GM12878 (cell line): ENCODE measurements at regions of chr3 and their contacts with region 1.

Region 1: GRCh38 chr3:69306239-69307185 is 79.4 kb downstream of the FRMD4B start:
- DNase-seq: no peak
- ATAC-seq: peak; percentile 98
- H3K4me3 ChIP-seq: no peak overlapping the region
- H3K27ac ChIP-seq: no peak overlapping the region
- H3K4me1 ChIP-seq: no peaks in the 10 kb centered on the region
- H3K27me3 ChIP-seq: no peaks in the 10 kb centered on the region
- CTCF ChIP-seq: peak; percentile 91 to 96 (median 94)
- EP300 ChIP-seq: no peak
- POLR2A ChIP-seq: no peak
- RAD21 ChIP-seq: peak; percentile 98

Region 2: GRCh38 chr3:69120879-69121464 is 185.5 kb before region 1 on chr3:
- CTCF ChIA-PET with region 1: interaction called, 86 read pairs
- POLR2A ChIA-PET with region 1: no interaction called
- RAD21 ChIA-PET with region 1: interaction called, 67 read pairs
- SMC1A ChIA-PET with region 1: interaction called, 58 read pairs
- in situ Hi-C with region 1: no loop called
- intact Hi-C with region 1: loop called (anchors 1 kb)
- DNase-seq: peak; percentile 48
- ATAC-seq: peak; percentile 96
- H3K4me3 ChIP-seq: no peak overlapping the region
- H3K27ac ChIP-seq: no peak overlapping the region
- H3K4me1 ChIP-seq: no peaks in the 10 kb centered on the region
- H3K27me3 ChIP-seq: 0 out of 4 replicates have a peak, but pooled peaks cover 0 to 3% of the 10 kb centered on the region in 2 experiments
- CTCF ChIP-seq: peak; percentile 91 to 98 (median 95); a peak in 5 of 6 replicates
- EP300 ChIP-seq: no peak
- POLR2A ChIP-seq: no peak
- RAD21 ChIP-seq: peak; percentile 85

Region 3: DNA sequence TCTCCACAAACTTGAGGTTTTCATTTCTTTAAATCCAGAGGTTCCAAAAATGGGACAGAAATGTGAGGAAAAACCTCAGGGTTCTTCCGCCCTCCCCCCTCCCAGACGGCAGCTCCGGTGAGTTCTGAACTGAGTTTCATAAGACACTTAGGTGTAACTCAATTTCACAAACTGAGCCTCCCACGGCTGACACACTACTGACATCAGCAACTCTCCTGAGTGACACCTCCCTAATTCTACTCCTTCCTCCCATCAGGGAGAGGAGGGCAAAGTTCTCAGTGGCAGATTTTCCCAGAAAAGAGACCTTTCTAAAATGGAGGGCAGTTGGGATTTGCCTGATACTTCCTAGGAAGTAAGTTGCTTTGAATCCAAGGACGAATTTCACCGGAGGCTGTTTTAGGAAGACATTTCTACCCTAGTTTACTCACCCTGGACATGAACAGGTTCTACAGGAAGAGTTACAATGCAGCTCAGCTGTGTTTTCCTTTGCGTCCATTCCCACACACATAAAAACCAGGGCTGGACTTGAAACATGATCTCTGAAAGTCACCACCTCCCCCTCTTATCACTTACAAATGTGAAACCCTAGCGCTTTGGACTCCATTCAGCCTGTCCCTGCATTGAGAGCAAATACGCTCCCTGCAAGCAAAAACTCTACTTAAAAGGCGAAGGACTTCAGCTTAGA is 106.0 kb before region 1 on chr3:
- CTCF ChIA-PET with region 1: interaction called, 5 read pairs
- POLR2A ChIA-PET with region 1: no interaction called
- RAD21 ChIA-PET with region 1: interaction called, 17 read pairs
- SMC1A ChIA-PET with region 1: interaction called, 29 read pairs
- in situ Hi-C with region 1: no loop called
- intact Hi-C with region 1: no loop called
- DNase-seq: no peak
- ATAC-seq: peak; percentile 38
- H3K4me3 ChIP-seq: no peak overlapping the region
- H3K27ac ChIP-seq: no peak overlapping the region
- H3K4me1 ChIP-seq: peaks cover 10% of the 10 kb centered on the region
- H3K27me3 ChIP-seq: no peaks in the 10 kb centered on the region
- CTCF ChIP-seq: no peak
- EP300 ChIP-seq: no peak
- POLR2A ChIP-seq: no peak
- RAD21 ChIP-seq: no peak

Region 4: GRCh38 chr3:69240651-69241568 is 65.6 kb before region 1 on chr3:
- CTCF ChIA-PET with region 1: interaction called, 57 read pairs
- POLR2A ChIA-PET with region 1: interaction called, 4 read pairs
- RAD21 ChIA-PET with region 1: interaction called, 53 read pairs
- SMC1A ChIA-PET with region 1: interaction called, 98 read pairs
- in situ Hi-C with region 1: no loop called
- intact Hi-C with region 1: no loop called
- DNase-seq: peak; percentile 48
- ATAC-seq: peak; percentile 79
- H3K4me3 ChIP-seq: no peak overlapping the region
- H3K27ac ChIP-seq: 0 out of 2 replicates have a peak overlapping the region, but pooled peaks have one; percentile 40
- H3K4me1 ChIP-seq: peaks cover 21% of the 10 kb centered on the region
- H3K27me3 ChIP-seq: no peaks in the 10 kb centered on the region
- CTCF ChIP-seq: no peak
- EP300 ChIP-seq: no peak
- POLR2A ChIP-seq: no peak
- RAD21 ChIP-seq: no peak

Region 5: DNA sequence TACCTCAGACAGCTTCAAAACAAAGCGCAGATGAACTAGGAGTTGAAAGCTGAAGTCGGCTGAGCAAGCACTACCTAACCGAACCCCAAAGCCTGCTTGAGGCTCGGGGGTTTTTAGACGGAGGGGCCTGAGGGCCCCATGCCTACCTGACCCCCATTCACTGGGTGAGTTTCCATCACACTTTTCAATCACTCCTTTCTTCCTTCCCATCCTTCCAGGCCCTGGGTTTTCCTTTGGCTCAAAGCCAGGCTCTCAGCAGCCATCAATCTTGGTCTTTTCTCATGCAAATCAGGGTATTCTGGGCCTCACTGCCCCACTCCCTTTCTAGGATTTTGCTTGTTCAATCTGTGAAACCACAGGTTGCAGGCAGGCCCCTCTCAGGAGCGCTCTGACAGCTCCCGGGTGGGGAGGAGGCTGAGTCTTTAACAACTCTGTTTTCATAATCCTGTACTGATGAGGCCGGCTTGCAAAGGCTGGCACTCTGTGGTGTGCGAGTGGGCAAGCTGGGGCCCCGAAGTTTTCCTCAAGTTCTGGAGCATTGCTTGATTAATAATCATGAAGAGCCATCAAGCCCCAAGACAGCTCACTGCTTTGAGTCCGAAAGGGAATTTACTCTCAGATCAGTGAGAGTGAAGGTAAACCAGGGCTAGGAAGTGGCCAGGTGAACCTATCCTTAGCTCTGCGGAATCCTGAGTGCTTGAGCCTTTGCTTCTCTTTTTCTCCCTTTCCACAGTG is 18.2 kb before region 1 on chr3:
- CTCF ChIA-PET with region 1: interaction called, 16 read pairs
- POLR2A ChIA-PET with region 1: interaction called, 7 read pairs
- RAD21 ChIA-PET with region 1: interaction called, 28 read pairs
- SMC1A ChIA-PET with region 1: interaction called, 18 read pairs
- in situ Hi-C with region 1: no loop called
- intact Hi-C with region 1: no loop called
- DNase-seq: no peak
- ATAC-seq: peak; percentile 98
- H3K4me3 ChIP-seq: no peak overlapping the region
- H3K27ac ChIP-seq: no peak overlapping the region
- H3K4me1 ChIP-seq: peaks cover 12% of the 10 kb centered on the region
- H3K27me3 ChIP-seq: no peaks in the 10 kb centered on the region
- CTCF ChIP-seq: no peak
- EP300 ChIP-seq: 0 out of 4 replicates have a peak, but pooled peaks of 1 of the 2 experiments have one; percentile 32
- POLR2A ChIP-seq: no peak
- RAD21 ChIP-seq: no peak

Region 6: GRCh38 chr3:69410250-69410649 is 103.7 kb after region 1 on chr3:
- CTCF ChIA-PET with region 1: interaction called, 52 read pairs
- POLR2A ChIA-PET with region 1: no interaction called
- RAD21 ChIA-PET with region 1: interaction called, 11 read pairs
- SMC1A ChIA-PET with region 1: interaction called, 37 read pairs
- in situ Hi-C with region 1: no loop called
- intact Hi-C with region 1: no loop called
- DNase-seq: peak; percentile 61
- ATAC-seq: peak; percentile 100
- H3K4me3 ChIP-seq: no peak overlapping the region
- H3K27ac ChIP-seq: no peak overlapping the region
- H3K4me1 ChIP-seq: no peaks in the 10 kb centered on the region
- H3K27me3 ChIP-seq: no peaks in the 10 kb centered on the region
- CTCF ChIP-seq: peak; percentile 85 to 92 (median 86)
- EP300 ChIP-seq: no peak
- POLR2A ChIP-seq: no peak
- RAD21 ChIP-seq: peak; percentile 76

Region 7: GRCh38 chr3:69671082-69671952 is 364.8 kb after region 1 on chr3:
- CTCF ChIA-PET with region 1: interaction called, 7 read pairs
- POLR2A ChIA-PET with region 1: no interaction called
- RAD21 ChIA-PET with region 1: interaction called, 3 read pairs
- SMC1A ChIA-PET with region 1: interaction called, 3 read pairs
- in situ Hi-C with region 1: no loop called
- intact Hi-C with region 1: loop called (anchors 1 kb)
- DNase-seq: no peak
- ATAC-seq: peak; percentile 51; the same call in 1 of the 3 replicates
- H3K4me3 ChIP-seq: no peak overlapping the region
- H3K27ac ChIP-seq: no peak overlapping the region
- H3K4me1 ChIP-seq: no peaks in the 10 kb centered on the region
- H3K27me3 ChIP-seq: no peaks in the 10 kb centered on the region
- CTCF ChIP-seq: peak; percentile 50 to 63 (median 53); a peak in 5 of 6 replicates
- EP300 ChIP-seq: no peak
- POLR2A ChIP-seq: no peak
- RAD21 ChIP-seq: peak; percentile 69

Region 8: GRCh38 chr3:70120357-70121121 is 814.0 kb after region 1 on chr3:
- CTCF ChIA-PET with region 1: no interaction called
- POLR2A ChIA-PET with region 1: no interaction called
- RAD21 ChIA-PET with region 1: no interaction called
- SMC1A ChIA-PET with region 1: no interaction called
- in situ Hi-C with region 1: no loop called
- intact Hi-C with region 1: no loop called
- DNase-seq: peak; percentile 36
- ATAC-seq: peak; percentile 99
- H3K4me3 ChIP-seq: no peak overlapping the region
- H3K27ac ChIP-seq: no peak overlapping the region
- H3K4me1 ChIP-seq: no peaks in the 10 kb centered on the region
- H3K27me3 ChIP-seq: no peaks in the 10 kb centered on the region
- CTCF ChIP-seq: peak; percentile 88 to 96 (median 94)
- EP300 ChIP-seq: no peak
- POLR2A ChIP-seq: no peak
- RAD21 ChIP-seq: peak; percentile 89